Heart right ventricle (tissue), 16 donors: ENCODE measurements at regions of chr22 and their contacts with region 1.

Region 1: DNA sequence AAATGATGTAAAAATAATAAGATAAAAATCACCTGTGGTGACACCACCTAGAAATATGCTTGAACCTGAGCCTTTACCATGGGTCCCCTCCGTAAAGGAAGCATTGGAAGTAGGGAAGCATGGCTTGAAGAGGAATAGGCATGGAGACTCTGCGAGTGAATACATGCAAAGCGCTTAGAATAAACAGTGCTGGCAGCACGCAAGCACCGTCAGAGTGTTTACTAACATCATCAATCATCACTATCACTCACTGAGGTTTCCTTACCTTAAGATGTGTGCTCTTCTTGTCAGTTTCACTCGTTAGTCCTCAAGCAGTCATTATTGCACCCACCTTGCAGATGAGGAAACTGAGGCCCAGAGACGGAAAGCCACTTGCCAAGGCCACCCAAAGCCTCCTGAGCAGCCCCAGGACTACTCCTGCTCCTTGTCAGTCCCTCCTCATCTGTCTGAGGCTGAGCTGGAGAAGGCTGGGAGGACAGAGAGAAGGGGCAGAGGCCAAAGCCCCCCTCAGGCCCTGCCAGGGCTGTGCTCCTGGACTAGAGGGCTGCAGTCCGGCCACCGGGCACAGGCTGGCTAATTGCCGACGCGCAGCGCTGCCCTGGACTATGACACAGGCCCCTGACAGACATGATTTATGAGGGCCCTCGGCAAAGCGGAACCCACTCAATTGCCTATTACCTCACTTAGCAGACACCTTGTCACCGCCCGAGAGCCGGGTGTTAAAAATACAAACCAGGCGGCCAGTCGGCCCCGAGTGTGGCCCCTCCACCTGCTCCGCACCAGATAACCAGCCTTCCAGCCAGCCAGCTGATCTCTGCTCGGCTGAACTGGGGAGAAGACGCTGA is 168.9 kb downstream of the MN1 start:
- DNase-seq: peak; percentile 71 to 80
- ATAC-seq: peak; percentile 64 to 88 (median 86)
- H3K4me3 ChIP-seq: no peak overlapping the region
- H3K27ac ChIP-seq: peak overlapping the region in 4 of 10 donors; percentile 9 to 65 (median 26)
- H3K4me1 ChIP-seq: peaks cover 0 to 29% (median 9%) of the 10 kb centered on the region in 9 donors
- H3K27me3 ChIP-seq: peaks cover 0 to 3% (median 0%) of the 10 kb centered on the region in 7 donors
- CTCF ChIP-seq: no peak

Region 2: DNA sequence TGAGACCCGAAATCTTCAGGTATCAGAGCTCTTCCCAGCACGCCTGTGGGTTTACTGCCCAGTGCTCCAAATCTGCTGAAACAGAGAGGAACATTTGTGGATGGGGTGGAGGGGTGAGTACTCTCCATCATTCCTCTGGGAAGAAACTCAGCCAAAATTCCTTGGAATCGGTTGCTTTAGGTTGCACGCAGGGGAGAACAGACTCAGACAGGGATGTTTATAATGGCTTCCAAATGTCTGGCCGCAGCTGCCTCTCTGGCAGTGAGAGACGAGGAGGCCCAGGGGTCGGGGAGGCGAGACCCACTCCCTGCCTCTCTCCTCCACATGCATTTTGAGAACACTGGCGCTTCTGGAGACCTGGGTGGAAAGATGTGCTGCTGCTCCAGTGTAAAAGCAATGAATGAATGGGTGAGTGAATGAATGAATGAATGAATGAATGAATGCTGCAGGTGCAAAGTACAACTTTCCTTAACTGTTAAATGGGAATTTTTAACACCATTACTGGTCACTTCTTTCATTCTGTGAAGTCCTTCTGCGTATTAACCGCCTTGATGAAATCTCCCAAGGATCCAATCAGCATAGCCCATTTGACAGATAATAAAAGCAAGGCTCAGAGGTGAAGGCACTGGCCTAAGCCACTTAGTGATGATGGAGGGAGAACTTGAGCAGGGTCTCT is 537.9 kb before region 1 on chr22:
- intact Hi-C with region 1: no loop called
- DNase-seq: peak in 1 of 2 donors; percentile 25
- ATAC-seq: peak in 6 of 8 donors; percentile 26 to 70 (median 58)
- H3K4me3 ChIP-seq: no peak overlapping the region
- H3K27ac ChIP-seq: no peak overlapping the region
- H3K4me1 ChIP-seq: peaks cover 0 to 4% (median 0%) of the 10 kb centered on the region in 9 donors
- H3K27me3 ChIP-seq: peaks cover 4 to 74% (median 33%) of the 10 kb centered on the region in 7 donors
- CTCF ChIP-seq: no peak

Region 3: GRCh38 chr22:27487600-27488452 is 144.8 kb before region 1 on chr22:
- intact Hi-C with region 1: no loop called
- DNase-seq: no peak
- ATAC-seq: no peak
- H3K4me3 ChIP-seq: no peak overlapping the region
- H3K27ac ChIP-seq: no peak overlapping the region
- H3K4me1 ChIP-seq: peaks cover 0 to 8% (median 0%) of the 10 kb centered on the region in 9 donors
- H3K27me3 ChIP-seq: peaks cover 0 to 37% (median 0%) of the 10 kb centered on the region in 7 donors
- CTCF ChIP-seq: no peak

Region 4: DNA sequence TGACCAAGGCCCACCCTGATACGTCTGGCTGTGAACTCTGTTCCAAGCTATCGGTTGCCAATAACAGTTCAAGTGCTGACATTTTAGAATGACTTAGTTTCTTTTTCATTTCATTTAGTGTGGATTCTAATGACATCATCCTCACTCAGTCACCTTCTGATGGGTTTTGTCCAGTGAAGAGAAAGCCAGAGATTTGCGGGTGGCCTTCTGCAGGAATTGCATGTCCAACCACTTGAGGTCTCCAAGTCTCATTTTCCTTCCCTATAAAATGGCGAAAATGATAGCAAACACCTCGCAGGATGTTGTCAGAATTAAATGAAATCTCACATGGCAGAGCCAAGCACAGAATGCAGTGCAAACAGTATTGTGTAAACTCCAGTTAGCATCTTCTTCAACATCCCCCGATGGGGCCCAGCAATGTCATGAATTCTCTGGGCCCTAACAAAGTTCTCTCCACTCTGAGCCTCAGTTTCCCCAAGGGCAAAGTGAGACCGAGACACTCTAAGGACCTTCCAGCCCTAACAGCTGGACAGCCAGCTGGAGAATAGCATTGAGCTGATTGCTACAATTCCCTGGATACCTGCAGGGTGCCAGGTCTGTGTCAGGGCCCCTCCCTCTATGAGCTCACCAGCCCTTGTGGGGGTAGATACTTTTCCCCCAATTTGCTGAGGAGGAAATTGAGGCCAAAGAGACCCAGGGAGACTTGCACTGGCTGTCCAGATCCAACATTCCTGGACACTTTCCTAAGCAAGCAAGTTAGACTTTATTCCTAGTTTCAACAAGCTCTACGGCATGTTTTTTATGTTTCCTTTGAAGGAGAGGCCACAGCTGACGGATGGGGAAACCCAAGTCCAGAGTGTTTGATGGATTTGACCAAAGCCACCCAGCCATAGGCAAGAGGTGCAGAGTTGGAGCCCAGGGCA is 117.8 kb before region 1 on chr22:
- intact Hi-C with region 1: no loop called
- DNase-seq: peak; percentile 49 to 73
- ATAC-seq: peak; percentile 66 to 81 (median 73)
- H3K4me3 ChIP-seq: no peak overlapping the region
- H3K27ac ChIP-seq: peak overlapping the region in 8 of 10 donors; percentile 9 to 81 (median 62)
- H3K4me1 ChIP-seq: peaks cover 0 to 30% (median 10%) of the 10 kb centered on the region in 9 donors
- H3K27me3 ChIP-seq: no peaks in the 10 kb centered on the region
- CTCF ChIP-seq: peak in 2 of 9 donors; percentile 3 to 9

Region 5: DNA sequence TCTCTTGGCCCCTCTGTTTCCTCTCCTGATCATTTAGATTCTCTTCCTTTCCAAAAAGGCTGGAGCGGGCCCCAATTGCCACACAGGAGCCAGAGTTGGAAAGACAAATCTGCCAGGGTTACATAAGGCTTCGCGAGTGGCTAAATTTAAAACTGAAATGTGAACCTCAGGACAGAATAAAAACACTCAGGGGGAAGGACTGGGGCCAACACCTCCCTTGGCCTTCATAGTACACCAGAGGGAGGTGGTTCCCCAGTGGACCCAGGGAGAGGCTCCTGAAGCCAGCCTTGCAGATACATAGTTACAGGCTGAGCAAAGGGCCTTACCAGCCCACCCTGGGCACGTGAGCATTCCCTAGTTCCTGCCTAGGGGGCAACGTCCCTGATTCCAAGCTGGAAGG is 18.8 kb after region 1 on chr22:
- intact Hi-C with region 1: loop called in 1 of 10 experiments (anchors 2 kb)
- DNase-seq: peak in 1 of 2 donors; percentile 60
- ATAC-seq: peak; percentile 87 to 96 (median 92)
- H3K4me3 ChIP-seq: no peak overlapping the region
- H3K27ac ChIP-seq: peak overlapping the region in 7 of 10 donors; percentile 19 to 77 (median 57)
- H3K4me1 ChIP-seq: peaks cover 3 to 30% (median 14%) of the 10 kb centered on the region in 9 donors
- H3K27me3 ChIP-seq: no peaks in the 10 kb centered on the region
- CTCF ChIP-seq: peak in 5 of 9 donors; percentile 11 to 41 (median 37)

Region 6: GRCh38 chr22:27686534-27686933 is 53.9 kb after region 1 on chr22:
- intact Hi-C with region 1: loop called in 2 of 10 experiments (anchors 2 to 5 kb)
- DNase-seq: peak; percentile 78 to 89
- ATAC-seq: peak; percentile 91 to 97 (median 96)
- H3K4me3 ChIP-seq: no peak overlapping the region
- H3K27ac ChIP-seq: peak overlapping the region; percentile 79 to 93 (median 84)
- H3K4me1 ChIP-seq: peaks cover 2 to 27% (median 22%) of the 10 kb centered on the region in 9 donors
- H3K27me3 ChIP-seq: no peaks in the 10 kb centered on the region
- CTCF ChIP-seq: no peak

Region 7: DNA sequence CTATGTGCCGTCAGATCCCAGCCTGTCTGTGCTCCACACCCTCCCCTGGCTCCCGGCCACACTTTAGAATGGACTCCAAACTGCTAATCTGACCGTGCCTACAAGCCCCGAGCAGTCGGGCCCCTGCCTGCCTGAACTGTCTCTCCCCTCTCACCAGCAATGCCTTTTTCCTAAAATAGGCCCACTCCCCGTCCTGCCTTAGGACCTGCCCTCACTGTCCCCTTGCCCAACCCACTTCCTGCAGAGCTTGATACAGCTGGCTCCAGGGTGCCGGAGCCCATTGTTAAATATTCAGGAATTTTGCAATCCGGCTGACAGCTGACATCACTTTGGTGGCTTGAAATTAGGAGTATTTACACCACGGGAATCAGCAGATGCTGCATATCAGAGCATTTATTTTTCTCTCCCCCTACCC is 147.5 kb after region 1 on chr22:
- intact Hi-C with region 1: loop called in 1 of 10 experiments (anchors 1 kb)
- DNase-seq: peak in 1 of 2 donors; percentile 35
- ATAC-seq: peak in 6 of 8 donors; percentile 39 to 71 (median 50)
- H3K4me3 ChIP-seq: no peak overlapping the region
- H3K27ac ChIP-seq: peak overlapping the region in 9 of 10 donors; percentile 20 to 80 (median 58)
- H3K4me1 ChIP-seq: peaks cover 17 to 91% (median 36%) of the 10 kb centered on the region in 9 donors
- H3K27me3 ChIP-seq: peaks cover 0 to 9% (median 0%) of the 10 kb centered on the region in 7 donors
- CTCF ChIP-seq: no peak

Region 8: DNA sequence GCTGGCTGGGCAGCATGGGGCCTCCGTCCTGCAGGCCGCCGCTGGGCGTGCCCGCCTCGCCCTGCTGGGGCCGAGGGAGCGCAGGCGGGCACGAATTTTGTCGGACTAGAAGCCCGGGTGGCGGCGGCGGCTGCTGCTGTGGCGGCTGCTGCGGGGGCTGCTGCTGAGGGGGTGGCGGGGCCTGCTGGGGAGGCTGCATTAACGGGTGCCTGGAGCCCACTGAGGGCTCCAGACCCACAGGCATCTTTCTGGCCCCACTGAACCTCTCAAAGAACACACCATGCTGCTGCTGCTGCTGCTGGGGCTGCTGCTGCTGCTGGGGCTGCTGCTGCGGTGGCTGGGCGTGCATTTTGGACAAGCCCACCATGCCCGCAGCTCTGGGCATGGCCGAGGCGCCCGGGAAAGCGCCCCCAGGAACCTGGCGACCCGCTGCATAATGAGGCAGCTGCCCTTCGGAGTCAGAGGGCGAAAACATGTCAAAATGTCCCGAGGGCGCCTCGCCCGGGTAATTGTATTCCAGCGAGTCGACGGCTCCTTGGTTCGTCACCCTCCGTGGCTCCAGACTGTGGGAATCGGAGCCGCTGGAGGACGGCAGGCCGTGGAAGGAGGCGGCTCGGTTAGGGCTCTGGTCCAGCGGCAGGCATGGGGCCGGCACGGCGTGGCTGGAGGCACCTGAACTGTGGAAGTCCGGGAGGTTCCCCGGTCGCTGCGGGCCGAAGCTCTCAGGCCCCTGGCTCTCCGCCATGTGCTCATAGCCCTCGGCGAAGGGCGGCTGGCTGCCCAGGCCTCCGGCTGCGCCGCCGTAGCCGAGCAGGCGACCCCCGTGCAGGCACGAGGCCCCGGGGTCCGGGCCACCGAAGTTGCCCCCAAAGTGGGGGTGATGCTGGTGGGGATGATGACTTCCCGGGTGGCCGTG is 166.9 kb after region 1 on chr22:
- intact Hi-C with region 1: loop called in 4 of 10 experiments (anchors 5 to 10 kb)
- DNase-seq: peak in 1 of 2 donors; percentile 57
- ATAC-seq: peak in 2 of 8 donors; percentile 7 to 14
- H3K4me3 ChIP-seq: peak overlapping the region; percentile 57 to 93 (median 73)
- H3K27ac ChIP-seq: peak overlapping the region; percentile 77 to 95 (median 87)
- H3K4me1 ChIP-seq: peaks cover 3 to 59% (median 36%) of the 10 kb centered on the region in 9 donors
- H3K27me3 ChIP-seq: peaks cover 0 to 79% (median 15%) of the 10 kb centered on the region in 7 donors
- CTCF ChIP-seq: no peak